ENCODE measurements at regions of chr14 and their contacts with region 1.

Region 1: GRCh38 chr14:31561155-31561846 is at the start of gene NUBPL:
- DNase-seq: peak; percentile 91 to 97 (median 94)
- H3K4me3 ChIP-seq: peak within 1 kb of the TSS; percentile 67 to 98 (median 85)
- H3K27ac ChIP-seq: peak within 1 kb of the TSS; percentile 35 to 96 (median 86)
- H3K27me3 ChIP-seq: no peaks in the 10 kb centered on the region
- CTCF ChIP-seq: peak in 25 of 56 donors; percentile 6 to 55 (median 31)
- total RNA-seq, gene NUBPL: 7.5 to 25.4 (median 16.1) TPM

Region 2: DNA sequence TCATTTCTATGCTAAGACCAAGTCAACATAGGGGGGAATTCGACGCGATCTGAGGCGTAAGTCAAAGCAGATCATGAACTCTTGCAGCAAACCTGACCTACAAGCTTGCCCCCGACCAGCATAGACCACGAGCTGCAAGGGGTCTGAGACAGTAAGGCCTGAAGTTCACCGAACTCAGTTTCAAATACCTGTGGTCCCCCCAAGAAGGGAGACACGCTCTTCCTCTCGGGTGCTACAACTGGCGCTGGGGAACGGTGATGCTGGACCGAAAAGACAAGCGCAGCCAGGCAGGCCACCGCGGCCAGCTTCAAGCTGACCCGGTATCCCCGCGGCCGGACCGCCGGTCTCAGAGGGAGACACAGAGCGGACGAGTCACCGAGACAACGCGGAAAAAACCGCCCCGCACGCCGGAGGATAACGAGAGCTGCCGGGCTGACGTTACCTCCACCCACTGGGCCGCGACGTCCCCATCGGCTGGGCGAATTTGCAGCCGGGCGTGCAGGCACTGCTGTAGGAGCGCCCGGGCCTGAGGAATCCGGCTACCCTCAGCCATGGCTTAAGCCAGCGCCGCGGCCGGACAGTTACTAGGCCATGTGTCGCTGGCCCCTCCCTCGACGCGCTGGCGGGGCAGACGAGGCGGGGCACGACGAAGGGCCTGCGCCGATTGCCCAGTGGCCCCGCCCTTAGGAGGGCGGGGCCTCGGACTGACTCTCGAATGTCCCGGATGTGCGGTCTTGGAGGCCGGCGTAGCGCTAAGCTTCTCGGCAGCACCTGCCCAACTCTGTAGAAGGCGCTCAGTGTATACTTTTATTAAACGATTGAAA is 104.2 kb before region 1 on chr14 and contains the start of gene DTD2:
- intact Hi-C with region 1: loop called (anchors 2 to 5 kb)
- DNase-seq: peak; percentile 94 to 97 (median 96)
- H3K4me3 ChIP-seq: peak within 1 kb of the TSS; percentile 56 to 98 (median 82)
- H3K27ac ChIP-seq: peak within 1 kb of the TSS; percentile 70 to 98 (median 93)
- H3K27me3 ChIP-seq: no peaks in the 10 kb centered on the region
- CTCF ChIP-seq: peak in 38 of 56 donors; percentile 4 to 59 (median 28)
- total RNA-seq, gene DTD2: 11.4 to 33.1 (median 22.2) TPM

Measured in dorsolateral prefrontal cortex (tissue), 120 donors.